Heart right ventricle (tissue), 16 donors: ENCODE measurements at regions of chr12 and their contacts with region 1.

Region 1: GRCh38 chr12:6944381-6945186 is 762 bp downstream of the C12orf57 start:
- DNase-seq: peak; percentile 94 to 95
- ATAC-seq: peak; percentile 69 to 86 (median 79)
- H3K4me3 ChIP-seq: peak overlapping the region; percentile 56 to 96 (median 78)
- H3K27ac ChIP-seq: peak overlapping the region; percentile 84 to 99 (median 96)
- H3K4me1 ChIP-seq: peaks cover 18 to 73% (median 43%) of the 10 kb centered on the region in 9 donors
- H3K27me3 ChIP-seq: no peaks in the 10 kb centered on the region
- CTCF ChIP-seq: peak; percentile 68 to 97 (median 84)

Region 2: GRCh38 chr12:6867413-6868210 is 77.0 kb before region 1 on chr12 and contains the start of gene TPI1:
- intact Hi-C with region 1: loop called in 2 of 10 experiments (anchors 5 to 10 kb)
- DNase-seq: peak; percentile 86 to 89
- ATAC-seq: peak; percentile 81 to 93 (median 88)
- H3K4me3 ChIP-seq: peak within 1 kb of the TSS; percentile 81 to 100 (median 98)
- H3K27ac ChIP-seq: peak within 1 kb of the TSS; percentile 93 to 100 (median 100)
- H3K4me1 ChIP-seq: peaks cover 32 to 53% (median 49%) of the 10 kb centered on the region in 9 donors
- H3K27me3 ChIP-seq: no peaks in the 10 kb centered on the region
- CTCF ChIP-seq: peak in 4 of 9 donors; percentile 11 to 24 (median 20)
- total RNA-seq, gene TPI1: 739 to 1,044 (median 839) TPM

Region 3: GRCh38 chr12:6927379-6928024 is 17.1 kb before region 1 on chr12 and contains the start of gene ATN1:
- intact Hi-C with region 1: loop called in 1 of 10 experiments (anchors 1 kb)
- DNase-seq: peak; percentile 86 to 91
- ATAC-seq: peak; percentile 31 to 69 (median 52)
- H3K4me3 ChIP-seq: peak within 1 kb of the TSS; percentile 69 to 97 (median 88)
- H3K27ac ChIP-seq: peak within 1 kb of the TSS; percentile 74 to 98 (median 96)
- H3K4me1 ChIP-seq: peaks cover 25 to 81% (median 65%) of the 10 kb centered on the region in 9 donors
- H3K27me3 ChIP-seq: peaks cover 0 to 5% (median 0%) of the 10 kb centered on the region in 7 donors
- CTCF ChIP-seq: no peak
- total RNA-seq, gene ATN1: 54.7 to 96.7 (median 65.8) TPM

Region 4: GRCh38 chr12:7018350-7019042 is 73.9 kb after region 1 on chr12 and contains the start of gene LPCAT3:
- intact Hi-C with region 1: loop called in 1 of 10 experiments (anchors 2 kb)
- DNase-seq: peak; percentile 97 to 99
- ATAC-seq: peak; percentile 95 to 98 (median 98)
- H3K4me3 ChIP-seq: peak within 1 kb of the TSS; percentile 63 to 93 (median 72)
- H3K27ac ChIP-seq: peak within 1 kb of the TSS; percentile 74 to 97 (median 90)
- H3K4me1 ChIP-seq: peaks cover 0 to 35% (median 21%) of the 10 kb centered on the region in 9 donors
- H3K27me3 ChIP-seq: no peaks in the 10 kb centered on the region
- CTCF ChIP-seq: peak; percentile 85 to 97 (median 90)
- total RNA-seq, gene LPCAT3: 19.9 to 65.8 (median 34.1) TPM

Region 5: DNA sequence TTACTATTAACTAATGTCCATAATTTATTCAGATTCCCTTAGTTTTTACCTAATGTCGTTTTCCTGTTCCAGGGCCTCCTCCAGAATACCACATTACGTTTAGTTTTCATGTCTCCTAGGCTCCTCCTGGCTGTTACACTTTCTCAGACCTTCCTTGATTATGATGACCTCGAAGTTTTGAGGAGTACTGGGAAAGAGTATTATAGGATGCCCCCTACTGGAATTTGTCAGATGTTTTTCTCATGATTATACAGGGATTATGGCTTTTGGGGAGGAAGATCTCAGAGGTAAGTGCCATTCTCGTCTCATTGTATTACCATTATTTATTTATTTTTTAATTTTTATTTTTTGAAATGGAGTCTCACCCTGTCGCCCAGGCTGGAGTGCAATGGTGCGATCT is 98.3 kb after region 1 on chr12:
- intact Hi-C with region 1: loop called in 4 of 10 experiments (anchors 1 to 10 kb)
- DNase-seq: no peak
- ATAC-seq: peak in 4 of 8 donors; percentile 56 to 74 (median 60)
- H3K4me3 ChIP-seq: no peak overlapping the region
- H3K27ac ChIP-seq: no peak overlapping the region
- H3K4me1 ChIP-seq: peaks cover 0 to 11% (median 0%) of the 10 kb centered on the region in 9 donors
- H3K27me3 ChIP-seq: no peaks in the 10 kb centered on the region
- CTCF ChIP-seq: peak in 8 of 9 donors; percentile 18 to 55 (median 46)

Region 6: GRCh38 chr12:7092229-7092985 is 147.8 kb after region 1 on chr12 and contains the start of gene C1R:
- intact Hi-C with region 1: loop called in 4 of 10 experiments (anchors 5 to 10 kb)
- DNase-seq: peak; percentile 66 to 77
- ATAC-seq: peak; percentile 74 to 88 (median 84)
- H3K4me3 ChIP-seq: peak within 1 kb of the TSS; percentile 9 to 67 (median 58)
- H3K27ac ChIP-seq: peak within 1 kb of the TSS; percentile 46 to 84 (median 79)
- H3K4me1 ChIP-seq: peaks cover 0 to 26% (median 16%) of the 10 kb centered on the region in 9 donors
- H3K27me3 ChIP-seq: no peaks in the 10 kb centered on the region
- CTCF ChIP-seq: peak; percentile 83 to 94 (median 91)
- total RNA-seq, gene C1R: 19.9 to 238 (median 59.0) TPM

Region 7: GRCh38 chr12:7108796-7109571 is 164.4 kb after region 1 on chr12 and contains the start of gene C1RL:
- intact Hi-C with region 1: loop called in 4 of 10 experiments (anchors 5 to 10 kb)
- DNase-seq: peak; percentile 90
- ATAC-seq: peak; percentile 75 to 91 (median 88)
- H3K4me3 ChIP-seq: peak within 1 kb of the TSS in 9 of 10 donors; percentile 41 to 70 (median 63)
- H3K27ac ChIP-seq: peak within 1 kb of the TSS; percentile 70 to 98 (median 89)
- H3K4me1 ChIP-seq: peaks cover 0 to 44% (median 14%) of the 10 kb centered on the region in 9 donors
- H3K27me3 ChIP-seq: no peaks in the 10 kb centered on the region
- CTCF ChIP-seq: peak; percentile 94 to 99 (median 97)
- total RNA-seq, gene C1RL: 4.5 to 24.9 (median 7.5) TPM